Dorsolateral prefrontal cortex (tissue), 120 donors: ENCODE measurements at regions of chr17 and their contacts with region 1.

Region 1: DNA sequence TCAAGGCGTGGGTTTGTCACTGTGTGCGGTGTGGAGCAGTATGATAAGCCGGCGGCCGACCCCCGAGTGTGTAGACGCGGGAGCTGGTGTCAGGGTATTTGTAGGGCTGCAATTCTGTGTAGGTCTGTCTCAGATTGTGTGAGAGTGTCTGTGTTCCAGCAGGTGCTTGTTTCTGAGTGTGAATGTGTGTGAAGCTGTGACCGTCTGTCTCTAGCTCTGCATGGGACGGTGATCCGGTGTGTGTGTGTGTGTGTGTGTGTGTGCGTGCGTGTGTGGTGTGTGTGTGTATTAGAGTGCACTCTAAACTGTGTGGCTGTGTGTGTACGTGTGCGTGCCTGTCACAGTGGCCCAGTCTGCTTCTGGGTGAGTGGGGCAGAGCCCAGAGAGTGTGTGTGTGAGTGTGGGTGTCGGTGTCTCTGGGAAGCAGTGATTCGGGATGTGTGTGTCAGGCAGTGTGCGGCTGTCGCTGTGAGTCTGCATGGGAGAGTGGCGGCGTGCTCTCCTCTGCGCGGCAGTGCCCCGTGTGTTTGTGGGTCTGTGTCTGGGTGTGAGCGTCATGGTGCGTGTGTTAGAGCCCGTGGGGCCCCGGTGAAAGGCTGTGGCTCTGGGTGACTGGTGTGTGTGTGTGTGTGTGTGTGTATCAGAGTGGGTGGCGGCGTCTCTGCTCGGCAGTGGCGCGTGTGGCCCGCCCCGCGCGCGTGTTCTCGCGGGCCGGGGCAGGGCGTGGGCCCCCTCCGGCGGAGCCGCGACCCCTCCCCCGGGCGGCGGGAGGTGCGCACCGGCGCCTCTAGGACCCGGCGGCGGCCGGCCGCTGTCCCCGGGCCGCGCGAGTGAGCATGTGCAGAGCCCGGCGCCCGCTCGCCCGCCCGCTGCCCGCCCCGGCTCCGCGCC is at the start of gene WSCD1:
- DNase-seq: peak in 7 of 10 donors; percentile 19 to 68 (median 47)
- H3K4me3 ChIP-seq: peak within 1 kb of the TSS; percentile 54 to 87 (median 74)
- H3K27ac ChIP-seq: peak within 1 kb of the TSS in 49 of 59 donors; percentile 7 to 84 (median 66)
- H3K27me3 ChIP-seq: peaks cover 0 to 6% (median 0%) of the 10 kb centered on the region in 45 donors
- CTCF ChIP-seq: no peak
- total RNA-seq, gene WSCD1: 15.2 to 61.6 (median 26.2) TPM

Region 2: GRCh38 chr17:5584383-5585286 is 485.1 kb before region 1 on chr17 and contains the start of gene NLRP1:
- intact Hi-C with region 1: loop called (anchors 5 kb)
- DNase-seq: peak in 8 of 10 donors; percentile 35 to 64 (median 55)
- H3K4me3 ChIP-seq: peak within 1 kb of the TSS in 54 of 59 donors; percentile 0 to 59 (median 38)
- H3K27ac ChIP-seq: peak within 1 kb of the TSS in 27 of 59 donors; percentile 14 to 82 (median 53)
- H3K27me3 ChIP-seq: no peaks in the 10 kb centered on the region
- CTCF ChIP-seq: no peak
- total RNA-seq, gene NLRP1: 96.8 to 322 (median 204) TPM

Region 3: DNA sequence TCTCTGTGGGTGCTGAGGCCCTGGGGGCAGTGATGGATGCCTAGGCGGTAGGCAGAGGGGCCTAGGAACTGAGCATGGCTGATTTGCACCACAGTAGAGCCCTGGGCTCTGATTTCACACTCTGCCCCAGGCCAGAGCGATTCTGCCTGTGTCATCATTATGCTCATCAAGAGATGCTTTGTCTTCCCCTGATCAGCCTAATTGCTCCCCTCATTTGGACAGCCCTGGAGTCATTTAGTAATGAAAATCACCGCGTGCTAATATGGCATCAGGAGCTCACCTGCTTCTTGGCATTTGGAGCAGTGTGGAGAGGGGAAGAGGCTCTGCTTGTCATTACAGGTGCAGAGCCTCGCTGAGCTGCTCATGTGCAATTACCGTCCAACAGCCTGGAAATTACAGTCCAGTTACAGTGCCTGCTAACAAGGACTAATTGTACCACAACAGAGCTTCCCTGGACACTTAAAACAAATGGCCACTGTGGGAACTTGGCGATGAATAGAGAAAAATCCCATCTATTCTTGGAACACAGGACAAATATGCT is 156.7 kb before region 1 on chr17:
- intact Hi-C with region 1: loop called in 1 of 2 experiments (anchors 10 kb)
- DNase-seq: peak in 4 of 10 donors; percentile 9 to 61 (median 32)
- H3K4me3 ChIP-seq: no peak overlapping the region
- H3K27ac ChIP-seq: peak overlapping the region in 58 of 59 donors; percentile 27 to 96 (median 85)
- H3K27me3 ChIP-seq: peaks cover 0 to 5% (median 0%) of the 10 kb centered on the region in 45 donors
- CTCF ChIP-seq: peak in 3 of 56 donors; percentile 11 to 18 (median 16)

Region 4: GRCh38 chr17:5986644-5987043 is 83.1 kb before region 1 on chr17:
- intact Hi-C with region 1: no loop called
- DNase-seq: no peak
- H3K4me3 ChIP-seq: no peak overlapping the region
- H3K27ac ChIP-seq: no peak overlapping the region
- H3K27me3 ChIP-seq: no peaks in the 10 kb centered on the region
- CTCF ChIP-seq: no peak

Region 5: DNA sequence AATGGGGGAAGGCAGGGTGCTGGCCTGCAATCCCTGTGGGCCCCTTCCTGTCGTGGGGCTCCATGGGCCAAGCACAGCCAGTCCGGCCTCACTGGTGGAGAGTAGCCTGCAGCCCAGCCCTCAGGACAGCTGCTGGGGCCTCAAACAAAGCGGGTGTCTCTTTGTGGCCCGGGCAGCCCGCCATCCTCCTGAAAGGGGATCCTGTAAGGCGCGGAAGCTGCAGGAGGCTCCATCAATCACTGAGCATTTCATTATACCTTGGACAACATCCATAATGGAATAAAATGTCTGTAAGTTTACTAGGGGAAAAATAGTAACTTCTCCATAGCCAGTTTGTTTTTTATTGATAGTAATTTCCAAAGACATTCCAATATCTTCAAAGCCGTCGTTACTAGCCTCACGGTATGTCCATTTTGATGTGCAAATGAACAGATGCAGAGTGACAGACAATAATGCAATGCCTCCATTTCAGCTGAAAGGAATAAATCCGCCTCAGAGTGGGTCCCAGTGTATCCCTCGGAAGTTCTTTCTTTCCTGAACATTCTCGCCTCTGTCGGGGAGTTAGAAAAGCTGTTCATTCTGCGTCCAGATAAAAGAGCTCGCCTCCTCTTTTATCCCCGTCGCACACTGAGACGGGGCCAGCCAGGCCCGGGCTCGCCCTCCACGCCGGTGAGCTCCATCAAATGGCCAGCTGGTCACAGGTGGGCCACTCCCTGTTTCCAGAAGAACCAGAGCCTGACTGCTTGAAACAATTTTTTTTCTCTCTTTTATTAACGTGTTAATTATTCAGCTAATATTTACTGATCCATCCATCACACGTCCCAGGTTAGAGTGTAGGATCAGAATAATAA is 14.8 kb after region 1 on chr17:
- intact Hi-C with region 1: loop called in 1 of 2 experiments (anchors 2 kb)
- DNase-seq: peak; percentile 57 to 95 (median 92)
- H3K4me3 ChIP-seq: peak overlapping the region in 26 of 59 donors; percentile 0 to 52 (median 20)
- H3K27ac ChIP-seq: peak overlapping the region in 58 of 59 donors; percentile 63 to 96 (median 91)
- H3K27me3 ChIP-seq: no peaks in the 10 kb centered on the region
- CTCF ChIP-seq: peak in 13 of 56 donors; percentile 6 to 48 (median 11)

Region 6: DNA sequence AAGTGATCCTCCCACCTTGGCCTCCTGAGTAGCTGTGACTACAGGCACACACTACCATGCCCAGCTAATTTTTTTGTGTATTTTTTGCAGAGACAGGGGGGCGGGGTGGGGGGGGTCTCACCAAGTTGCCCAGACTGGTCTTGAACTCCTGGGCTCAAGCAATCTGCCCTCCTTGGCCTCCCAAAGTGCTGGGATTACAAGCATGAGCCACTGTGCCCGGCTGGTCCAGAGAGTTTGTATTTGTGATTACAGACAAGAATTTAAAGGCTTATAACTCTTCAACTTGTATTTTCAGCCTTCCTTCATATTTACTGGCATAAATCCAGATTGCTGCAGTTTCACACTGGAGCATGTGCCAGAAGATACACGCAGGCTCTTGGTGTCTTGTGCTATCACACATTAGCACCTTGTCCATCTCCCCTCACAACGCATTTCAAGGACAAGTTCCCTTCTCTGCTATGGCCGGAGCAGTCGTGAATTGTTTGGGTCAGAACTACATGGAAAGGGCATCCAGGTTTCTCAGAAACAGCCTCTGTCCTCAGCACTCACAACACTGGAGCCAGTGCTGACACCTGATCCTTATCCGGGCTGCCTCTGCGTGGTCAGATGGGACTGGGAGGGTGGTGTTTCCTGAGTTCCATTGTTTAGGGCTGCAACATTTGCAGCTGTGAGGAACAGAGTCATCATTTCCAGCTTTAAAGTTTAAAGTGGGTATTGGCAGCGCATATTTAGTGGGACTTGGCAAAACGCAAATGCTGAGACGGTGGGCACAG is 28.5 kb after region 1 on chr17:
- intact Hi-C with region 1: no loop called
- DNase-seq: peak in 3 of 10 donors; percentile 9 to 20 (median 17)
- H3K4me3 ChIP-seq: no peak overlapping the region
- H3K27ac ChIP-seq: peak overlapping the region in 3 of 59 donors; percentile 21 to 61 (median 47)
- H3K27me3 ChIP-seq: no peaks in the 10 kb centered on the region
- CTCF ChIP-seq: no peak

Region 7: GRCh38 chr17:6120351-6120750 is 50.6 kb after region 1 on chr17:
- intact Hi-C with region 1: no loop called
- DNase-seq: no peak
- H3K4me3 ChIP-seq: no peak overlapping the region
- H3K27ac ChIP-seq: no peak overlapping the region
- H3K27me3 ChIP-seq: no peaks in the 10 kb centered on the region
- CTCF ChIP-seq: no peak

Region 8: GRCh38 chr17:6413065-6413464 is 343.3 kb after region 1 on chr17:
- intact Hi-C with region 1: loop called in 1 of 2 experiments (anchors 5 kb)
- DNase-seq: no peak
- H3K4me3 ChIP-seq: no peak overlapping the region
- H3K27ac ChIP-seq: no peak overlapping the region
- H3K27me3 ChIP-seq: peaks cover 0 to 11% (median 0%) of the 10 kb centered on the region in 45 donors
- CTCF ChIP-seq: peak in 54 of 56 donors; percentile 25 to 63 (median 50)

Region 9: DNA sequence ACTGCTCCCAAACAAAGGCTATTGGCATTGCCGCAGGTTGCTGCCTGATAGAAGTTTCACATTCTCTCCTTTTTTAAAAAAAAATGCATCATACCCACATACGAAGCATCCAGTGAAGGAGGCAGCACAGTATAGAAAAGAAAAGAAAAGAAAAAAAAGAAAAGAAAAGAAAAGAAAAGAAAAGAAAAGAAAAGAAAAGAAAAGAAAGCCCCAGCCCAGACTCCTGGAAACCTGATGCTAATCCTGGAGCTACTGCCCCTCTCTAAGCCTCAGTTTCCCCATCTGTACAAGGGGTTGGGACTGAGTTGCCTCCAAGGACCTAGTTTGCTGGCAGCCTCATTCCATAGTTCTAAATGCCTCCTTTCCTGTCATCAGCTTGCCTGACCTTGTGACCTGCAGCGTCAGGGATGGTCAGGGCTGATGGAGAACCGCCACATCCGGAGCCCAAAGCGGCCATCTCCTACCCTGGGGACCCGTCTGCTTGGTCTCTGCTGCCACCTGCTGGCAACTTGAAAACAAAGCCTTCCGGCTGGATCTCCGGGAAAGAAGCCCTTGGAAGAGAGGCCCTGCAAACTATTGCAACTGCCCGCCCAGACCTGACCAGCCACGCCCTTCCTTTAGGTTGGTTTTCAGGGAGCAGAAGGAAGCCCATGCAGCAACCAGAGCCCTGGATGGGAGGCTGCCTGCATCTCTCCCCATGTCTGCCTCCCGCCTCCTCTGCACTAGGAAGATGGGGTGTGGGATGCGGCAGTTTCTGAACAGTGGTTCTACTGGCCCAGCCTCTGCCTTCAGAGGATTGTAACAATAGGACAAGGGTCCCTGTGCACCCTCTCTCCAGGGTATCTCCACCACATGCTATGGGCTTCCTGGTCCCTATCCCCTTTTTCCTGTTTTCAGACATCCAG is 352.2 kb after region 1 on chr17:
- intact Hi-C with region 1: loop called in 1 of 2 experiments (anchors 5 kb)
- DNase-seq: peak; percentile 73 to 89 (median 80)
- H3K4me3 ChIP-seq: no peak overlapping the region
- H3K27ac ChIP-seq: no peak overlapping the region
- H3K27me3 ChIP-seq: no peaks in the 10 kb centered on the region
- CTCF ChIP-seq: peak; percentile 69 to 97 (median 92)